PC-9 (cell line): ENCODE measurements at regions of chr16 and their contacts with region 1.

Region 1: GRCh38 chr16:88941913-88942909 is 34.8 kb downstream of the CBFA2T3 start:
- DNase-seq: peak in 1 of 2 experiments; percentile 49
- H3K4me3 ChIP-seq: no peak overlapping the region
- H3K27ac ChIP-seq: no peak overlapping the region
- H3K4me1 ChIP-seq: no peaks in the 10 kb centered on the region
- H3K27me3 ChIP-seq: peaks cover 36% of the 10 kb centered on the region
- CTCF ChIP-seq: peak; percentile 46; the same call in 1 of the 2 replicates

Region 2: DNA sequence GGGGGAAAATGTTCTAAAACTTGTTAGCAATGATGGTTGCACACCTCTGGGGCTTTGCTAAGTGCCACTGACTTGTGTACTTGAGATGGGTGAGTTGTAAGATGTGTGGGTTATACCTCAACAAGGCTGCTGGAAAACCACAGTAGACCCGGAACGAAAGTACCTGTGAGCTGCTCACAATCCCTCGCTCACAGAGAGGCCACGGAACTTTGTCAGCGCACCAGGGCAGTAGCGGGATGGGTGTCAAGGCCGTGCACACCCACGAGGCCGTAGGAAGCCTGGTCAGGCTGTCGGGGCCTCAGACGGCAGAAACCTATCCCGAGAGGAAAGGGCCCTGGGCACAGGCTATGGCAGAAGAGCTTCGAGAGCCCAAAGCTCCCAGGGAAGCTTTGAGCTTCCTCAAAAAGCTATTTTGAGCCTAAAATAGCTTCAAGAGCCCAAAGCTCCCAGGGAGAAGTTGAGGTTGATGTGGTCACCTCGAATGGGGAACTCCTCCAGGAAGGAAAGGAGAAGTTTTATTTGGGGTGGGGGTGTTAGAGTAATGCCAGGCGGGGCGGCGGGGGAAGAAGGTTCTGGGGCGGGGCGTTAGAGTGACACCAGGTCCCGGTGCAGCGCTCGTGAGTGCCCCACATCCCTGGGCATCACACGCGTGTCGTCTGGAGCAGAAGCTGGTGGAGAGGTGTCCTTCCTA is 15.8 kb after region 1 on chr16:
- CTCF ChIA-PET with region 1: no interaction called
- POLR2A ChIA-PET with region 1: no interaction called
- intact Hi-C with region 1: no loop called
- DNase-seq: no peak
- H3K4me3 ChIP-seq: no peak overlapping the region
- H3K27ac ChIP-seq: no peak overlapping the region
- H3K4me1 ChIP-seq: no peaks in the 10 kb centered on the region
- H3K27me3 ChIP-seq: peaks cover 63% of the 10 kb centered on the region
- CTCF ChIP-seq: no peak

Region 3: DNA sequence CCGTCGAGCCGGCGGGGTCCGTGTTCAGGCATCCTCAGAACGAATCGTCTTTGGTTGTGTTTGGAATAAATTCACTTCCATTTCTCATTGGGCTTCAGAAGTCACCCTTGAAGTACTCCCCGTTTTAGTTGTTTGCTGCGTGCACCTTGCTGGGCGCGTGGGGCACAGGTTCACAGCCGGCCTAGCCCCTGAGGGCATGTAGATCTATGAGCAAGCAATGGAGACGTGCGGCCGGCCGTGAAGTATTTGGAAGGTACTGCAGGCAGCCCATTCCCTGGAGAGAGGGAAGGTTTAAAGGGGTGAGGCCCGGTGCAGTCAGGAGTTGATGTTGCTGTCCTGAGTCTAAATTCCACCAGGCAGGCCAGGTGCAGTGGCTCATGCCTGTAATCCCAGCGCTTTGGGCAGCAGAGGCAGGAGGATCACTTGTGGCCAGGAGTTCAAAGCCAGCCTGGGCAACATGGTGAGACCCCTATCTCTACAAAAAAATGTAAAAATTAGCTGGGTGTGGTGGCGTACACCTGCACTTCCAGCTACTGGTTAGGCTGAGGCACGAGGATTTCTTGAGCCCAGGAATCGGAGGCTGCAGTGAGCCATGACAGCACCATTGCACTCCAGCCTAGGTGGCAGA is 152.2 kb after region 1 on chr16:
- CTCF ChIA-PET with region 1: interaction called, 10 read pairs
- POLR2A ChIA-PET with region 1: no interaction called
- intact Hi-C with region 1: no loop called
- DNase-seq: peak; percentile 24 to 48
- H3K4me3 ChIP-seq: peak overlapping the region; percentile 100
- H3K27ac ChIP-seq: no peak overlapping the region
- H3K4me1 ChIP-seq: peaks cover 8% of the 10 kb centered on the region
- H3K27me3 ChIP-seq: peaks cover 39% of the 10 kb centered on the region
- CTCF ChIP-seq: no peak